GM12878 (cell line): ENCODE measurements at regions of chr3 and their contacts with region 1.

Region 1: GRCh38 chr3:183591881-183592521 is 36.5 kb upstream of the KLHL6 start:
- DNase-seq: peak; percentile 96
- ATAC-seq: peak; percentile 89
- H3K4me3 ChIP-seq: no peak overlapping the region; the same call in 1 of the 2 replicates
- H3K27ac ChIP-seq: no peak overlapping the region
- H3K4me1 ChIP-seq: peaks cover 22% of the 10 kb centered on the region
- H3K27me3 ChIP-seq: peaks cover 0 to 16% of the 10 kb centered on the region in 2 experiments; a peak in 1 of 4 replicates
- CTCF ChIP-seq: peak; percentile 23 to 48 (median 37); a peak in 4 of 6 replicates
- EP300 ChIP-seq: peak; percentile 27 to 84; a peak in 3 of 4 replicates
- POLR2A ChIP-seq: no peak
- RAD21 ChIP-seq: peak; percentile 41; the same call in 1 of the 2 replicates

Region 2: DNA sequence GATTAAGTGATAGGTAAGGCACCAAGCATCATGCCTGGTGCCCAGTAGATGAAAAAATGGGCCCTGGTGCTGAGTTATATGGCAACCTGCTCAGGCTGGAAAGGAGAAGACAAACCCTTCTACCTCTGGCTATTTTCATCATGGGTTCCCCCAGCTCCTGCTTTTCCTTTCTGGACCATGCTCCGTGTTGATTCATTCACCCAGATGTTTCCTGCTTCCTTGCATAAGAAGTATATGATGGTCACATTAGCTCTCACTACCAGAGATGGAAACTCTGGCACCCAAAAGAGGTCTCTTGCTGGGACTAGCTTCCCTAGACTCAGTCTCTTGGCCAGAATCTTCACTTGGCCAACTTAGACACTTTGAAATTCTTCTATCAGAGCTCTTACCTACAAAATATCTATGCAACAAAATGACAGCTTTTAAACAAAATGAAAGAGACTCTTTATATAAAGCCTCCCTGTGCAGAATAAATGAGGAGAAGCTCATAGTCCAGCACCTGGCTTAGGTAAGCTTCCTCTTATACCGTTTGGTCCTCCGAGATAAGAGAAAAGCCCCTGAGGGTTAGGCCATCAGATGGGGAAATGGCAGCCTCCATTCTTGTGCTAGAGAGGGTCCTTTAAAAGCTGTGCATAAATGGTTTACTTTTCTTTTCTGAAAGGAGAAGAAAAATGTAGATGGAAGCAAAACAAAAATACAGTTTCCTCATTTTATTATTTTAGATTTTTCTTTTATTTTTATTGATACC is 116.8 kb before region 1 on chr3:
- CTCF ChIA-PET with region 1: interaction called, 10 read pairs
- POLR2A ChIA-PET with region 1: interaction called, 4 read pairs
- RAD21 ChIA-PET with region 1: interaction called, 4 read pairs
- SMC1A ChIA-PET with region 1: interaction called, 19 read pairs
- in situ Hi-C with region 1: no loop called
- intact Hi-C with region 1: loop called (anchors 5 kb)
- DNase-seq: no peak
- ATAC-seq: no peak
- H3K4me3 ChIP-seq: no peak overlapping the region
- H3K27ac ChIP-seq: no peak overlapping the region
- H3K4me1 ChIP-seq: no peaks in the 10 kb centered on the region
- H3K27me3 ChIP-seq: no peaks in the 10 kb centered on the region; a peak in 1 of 4 replicates
- CTCF ChIP-seq: no peak
- EP300 ChIP-seq: no peak
- POLR2A ChIP-seq: no peak
- RAD21 ChIP-seq: no peak

Region 3: GRCh38 chr3:183527428-183528379 is 64.3 kb before region 1 on chr3:
- CTCF ChIA-PET with region 1: interaction called, 20 read pairs
- POLR2A ChIA-PET with region 1: interaction called, 22 read pairs
- RAD21 ChIA-PET with region 1: interaction called, 30 read pairs
- SMC1A ChIA-PET with region 1: interaction called, 36 read pairs
- in situ Hi-C with region 1: no loop called
- intact Hi-C with region 1: loop called (anchors 5 kb)
- DNase-seq: peak; percentile 73
- ATAC-seq: peak; percentile 82
- H3K4me3 ChIP-seq: no peak overlapping the region; the same call in 1 of the 2 replicates
- H3K27ac ChIP-seq: peak overlapping the region; percentile 67
- H3K4me1 ChIP-seq: peaks cover 39% of the 10 kb centered on the region
- H3K27me3 ChIP-seq: no peaks in the 10 kb centered on the region
- CTCF ChIP-seq: no peak
- EP300 ChIP-seq: peak; percentile 93 to 96
- POLR2A ChIP-seq: no peak
- RAD21 ChIP-seq: peak; percentile 16; the same call in 1 of the 2 replicates

Region 4: DNA sequence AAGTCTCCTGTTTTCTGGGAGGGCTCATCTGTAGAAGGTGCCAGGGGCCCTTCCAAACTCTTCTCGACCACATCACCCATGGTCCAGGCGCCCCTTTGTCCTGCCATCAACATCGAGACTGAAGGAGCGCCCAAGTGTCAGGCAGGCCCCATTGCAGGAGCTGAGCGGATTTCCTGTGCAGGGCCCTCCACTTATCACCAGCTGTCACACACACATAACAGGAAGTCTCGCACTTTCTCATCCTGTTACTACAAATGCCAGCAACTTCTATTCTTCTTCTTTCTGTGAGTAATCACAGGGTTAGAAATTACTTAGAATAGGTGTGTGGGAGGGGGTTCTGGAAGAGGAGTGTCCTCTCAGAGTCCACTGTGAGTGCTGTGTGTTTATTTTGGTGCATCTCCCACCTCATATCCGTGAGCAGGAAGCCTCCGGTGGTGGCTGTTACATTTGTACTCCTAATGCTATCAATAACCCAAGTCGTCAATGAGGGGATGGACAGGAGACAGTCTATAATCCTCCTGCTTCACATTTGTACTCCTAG is 36.4 kb before region 1 on chr3 and contains the start of gene KLHL6:
- CTCF ChIA-PET with region 1: interaction called, 30 read pairs
- POLR2A ChIA-PET with region 1: interaction called, 29 read pairs
- RAD21 ChIA-PET with region 1: interaction called, 48 read pairs
- SMC1A ChIA-PET with region 1: interaction called, 61 read pairs
- in situ Hi-C with region 1: no loop called
- intact Hi-C with region 1: loop called (anchors 2 kb)
- DNase-seq: peak; percentile 64
- ATAC-seq: peak; percentile 79
- H3K4me3 ChIP-seq: peak within 1 kb of the TSS; percentile 75
- H3K27ac ChIP-seq: peak within 1 kb of the TSS; percentile 56
- H3K4me1 ChIP-seq: peaks cover 22% of the 10 kb centered on the region
- H3K27me3 ChIP-seq: peaks cover 0 to 3% of the 10 kb centered on the region in 2 experiments; a peak in 1 of 4 replicates
- CTCF ChIP-seq: no peak
- EP300 ChIP-seq: peak; percentile 63 to 72; a peak in 2 of 4 replicates
- POLR2A ChIP-seq: peak; percentile 85
- RAD21 ChIP-seq: peak; percentile 29
- polyA plus RNA-seq, gene KLHL6: 4.0 to 4.2 TPM

Region 5: DNA sequence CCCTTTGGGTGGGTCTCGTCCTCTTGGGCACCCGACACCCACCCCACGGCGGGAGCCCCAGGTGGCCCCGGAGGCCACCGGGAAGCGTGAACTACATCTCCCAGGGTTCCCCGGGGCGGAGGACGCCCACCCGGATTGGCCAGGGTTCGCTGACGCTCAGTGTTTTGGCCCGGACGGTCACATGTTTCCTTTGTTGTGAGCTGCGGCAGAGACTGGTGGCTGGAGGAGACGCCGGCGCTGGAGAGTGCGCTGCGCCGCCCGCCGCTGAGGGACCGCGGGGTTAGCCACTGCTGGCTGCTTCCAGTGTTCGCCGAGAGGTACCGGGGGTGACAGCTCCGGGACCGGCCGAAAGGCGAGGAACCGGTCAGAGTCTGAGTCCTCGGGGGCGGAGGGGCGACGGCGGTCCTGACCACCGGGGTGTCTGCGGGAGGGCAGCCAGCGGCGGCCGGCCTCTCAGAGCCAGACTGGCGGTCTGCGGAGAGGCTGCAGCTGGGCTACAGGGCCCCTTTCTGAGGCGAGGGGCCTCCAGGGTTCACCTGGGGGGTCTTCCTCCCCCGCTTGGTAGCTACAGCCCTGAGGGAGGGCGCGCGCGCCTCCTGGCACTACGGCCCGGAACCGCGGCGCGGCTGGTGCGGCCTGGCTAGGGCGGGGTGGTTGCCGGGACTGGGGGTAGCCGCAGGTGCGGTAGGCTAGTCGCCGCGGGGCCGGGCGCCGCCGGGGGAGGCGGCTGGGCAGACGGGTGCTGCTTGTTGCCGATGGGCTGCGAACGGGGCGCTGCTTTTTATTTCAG is 43.6 kb after region 1 on chr3 and contains the start of gene KLHL24:
- CTCF ChIA-PET with region 1: interaction called, 16 read pairs
- POLR2A ChIA-PET with region 1: interaction called, 35 read pairs
- RAD21 ChIA-PET with region 1: interaction called, 30 read pairs
- SMC1A ChIA-PET with region 1: interaction called, 10 read pairs
- in situ Hi-C with region 1: no loop called
- intact Hi-C with region 1: loop called (anchors 5 kb)
- DNase-seq: peak; percentile 60
- ATAC-seq: peak; percentile 91
- H3K4me3 ChIP-seq: peak within 1 kb of the TSS; percentile 80
- H3K27ac ChIP-seq: peak within 1 kb of the TSS; percentile 77
- H3K4me1 ChIP-seq: peaks cover 19% of the 10 kb centered on the region; the same call in 1 of the 2 replicates
- H3K27me3 ChIP-seq: no peaks in the 10 kb centered on the region; a peak in 1 of 4 replicates
- CTCF ChIP-seq: 0 out of 6 replicates have a peak, but pooled peaks of 1 of the 3 experiments have one; percentile 5
- EP300 ChIP-seq: no peak
- POLR2A ChIP-seq: peak; percentile 90
- RAD21 ChIP-seq: no peak
- polyA plus RNA-seq, gene KLHL24: 0.91 to 1.6 TPM